H1 (cell line): ENCODE measurements at regions of chr7 and their contacts with region 1.

Region 1: DNA sequence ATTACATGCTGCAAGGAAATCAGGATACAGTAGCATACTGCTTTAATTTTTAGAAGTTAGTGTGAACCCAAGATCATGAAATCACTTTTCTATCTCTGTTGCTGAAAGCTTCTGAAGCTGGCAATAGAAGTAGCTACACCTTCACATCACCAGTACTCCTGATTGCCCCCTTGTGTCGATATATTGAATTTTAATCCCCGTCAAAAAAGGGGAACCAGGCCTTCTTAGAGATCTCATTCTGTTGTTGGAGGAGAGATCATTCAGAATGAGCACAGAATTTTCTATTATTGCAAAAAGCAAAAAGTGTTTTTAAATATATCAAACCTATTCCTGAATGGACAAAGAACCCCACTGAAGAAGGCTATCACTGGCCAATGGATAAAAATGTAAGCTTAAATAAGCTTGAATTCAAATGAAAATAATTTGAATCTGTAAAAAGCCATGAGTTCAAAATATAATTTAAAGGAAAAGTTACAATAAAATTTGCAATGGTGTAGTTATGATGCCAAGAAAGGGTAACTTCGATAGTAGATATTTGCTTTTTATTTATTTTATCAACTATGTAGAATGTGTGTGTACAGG is 39.7 kb upstream of the TEX47 start:
- DNase-seq: peak in 1 of 2 experiments; percentile 3
- H3K4me3 ChIP-seq: no peak overlapping the region
- H3K27ac ChIP-seq: no peak overlapping the region
- H3K4me1 ChIP-seq: no peaks in the 10 kb centered on the region
- H3K27me3 ChIP-seq: no peaks in the 10 kb centered on the region
- CTCF ChIP-seq: peak in 2 of 3 experiments; percentile 53 to 55; a peak in 3 of 4 replicates
- EP300 ChIP-seq: no peak
- POLR2A ChIP-seq: no peak
- RAD21 ChIP-seq: peak; percentile 69 to 73

Region 2: GRCh38 chr7:87933945-87934698 is 901.1 kb before region 1 on chr7 and contains the start of gene ADAM22:
- CTCF ChIA-PET with region 1: no interaction called
- POLR2A ChIA-PET with region 1: no interaction called
- DNase-seq: peak; percentile 77 to 87
- H3K4me3 ChIP-seq: peak within 1 kb of the TSS; percentile 76 to 87 (median 80)
- H3K27ac ChIP-seq: peak within 1 kb of the TSS; percentile 33; the same call in 1 of the 2 replicates
- H3K4me1 ChIP-seq: peaks cover 0 to 6% (median 3%) of the 10 kb centered on the region in 4 experiments; a peak in 4 of 7 replicates
- H3K27me3 ChIP-seq: peaks cover 0 to 3% (median 1%) of the 10 kb centered on the region in 4 experiments; a peak in 1 of 7 replicates
- CTCF ChIP-seq: peak in 1 of 3 experiments; percentile 4; a peak in 1 of 4 replicates
- EP300 ChIP-seq: no peak
- POLR2A ChIP-seq: peak; percentile 87
- RAD21 ChIP-seq: peak in 1 of 2 experiments; percentile 3; a peak in 1 of 4 replicates
- total RNA-seq, gene ADAM22: 17.9 and 21.4 TPM in 2 replicates

Region 3: DNA sequence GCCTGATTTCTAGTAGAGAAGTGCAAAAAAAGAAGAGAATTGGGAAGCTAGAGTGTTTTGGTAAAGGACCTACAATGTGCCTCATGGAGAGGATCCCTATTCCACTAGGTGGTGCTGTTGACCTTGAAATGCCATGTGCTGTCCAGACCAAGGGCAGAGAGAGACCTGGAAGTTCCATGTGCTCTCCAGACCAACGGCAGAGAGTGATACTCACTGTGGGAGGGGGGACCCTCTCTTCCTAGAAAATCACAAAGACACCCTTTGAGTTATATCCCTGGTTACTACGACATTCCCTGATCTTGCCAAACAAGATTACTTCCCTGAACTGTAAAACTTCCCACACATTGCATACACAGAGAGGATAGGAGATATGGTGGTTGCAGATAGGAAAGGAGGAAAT is 288.4 kb before region 1 on chr7:
- CTCF ChIA-PET with region 1: interaction called, 13 read pairs
- POLR2A ChIA-PET with region 1: no interaction called
- DNase-seq: peak; percentile 17 to 60
- H3K4me3 ChIP-seq: no peak overlapping the region
- H3K27ac ChIP-seq: no peak overlapping the region
- H3K4me1 ChIP-seq: no peaks in the 10 kb centered on the region
- H3K27me3 ChIP-seq: no peaks in the 10 kb centered on the region
- CTCF ChIP-seq: peak; percentile 29 to 83 (median 57)
- EP300 ChIP-seq: no peak
- POLR2A ChIP-seq: no peak
- RAD21 ChIP-seq: peak; percentile 91 to 94

Region 4: GRCh38 chr7:88789480-88790064 is 45.7 kb before region 1 on chr7:
- CTCF ChIA-PET with region 1: interaction called, 10 read pairs
- POLR2A ChIA-PET with region 1: no interaction called
- DNase-seq: no peak
- H3K4me3 ChIP-seq: no peak overlapping the region
- H3K27ac ChIP-seq: no peak overlapping the region
- H3K4me1 ChIP-seq: no peaks in the 10 kb centered on the region
- H3K27me3 ChIP-seq: no peaks in the 10 kb centered on the region
- CTCF ChIP-seq: peak in 2 of 3 experiments; percentile 14 to 48; a peak in 2 of 4 replicates
- EP300 ChIP-seq: no peak
- POLR2A ChIP-seq: no peak
- RAD21 ChIP-seq: no peak; a peak in 1 of 4 replicates

Region 5: DNA sequence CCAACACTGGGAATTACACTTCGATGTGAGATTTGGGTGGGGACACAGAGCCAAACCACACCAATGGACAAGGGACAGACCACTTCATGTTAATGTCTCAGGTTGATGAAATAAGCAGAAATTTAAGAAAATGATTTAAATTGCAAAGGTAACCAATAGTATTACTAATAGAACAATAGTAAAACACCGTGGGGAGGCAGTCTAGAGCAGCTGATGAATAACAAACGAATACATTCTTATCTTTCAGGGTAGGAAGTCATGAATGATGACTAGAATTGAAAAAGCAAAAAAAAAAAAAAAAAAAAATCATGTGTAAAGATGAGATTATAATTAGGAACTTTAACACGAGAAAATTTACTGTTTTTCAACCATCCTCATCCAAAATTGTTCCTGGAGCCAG is 132.2 kb after region 1 on chr7:
- CTCF ChIA-PET with region 1: no interaction called
- POLR2A ChIA-PET with region 1: no interaction called
- DNase-seq: no peak
- H3K4me3 ChIP-seq: no peak overlapping the region
- H3K27ac ChIP-seq: no peak overlapping the region
- H3K4me1 ChIP-seq: peaks cover 0 to 5% (median 2%) of the 10 kb centered on the region in 4 experiments; a peak in 3 of 7 replicates
- H3K27me3 ChIP-seq: no peaks in the 10 kb centered on the region
- CTCF ChIP-seq: no peak
- EP300 ChIP-seq: no peak
- POLR2A ChIP-seq: no peak
- RAD21 ChIP-seq: no peak